ENCODE measurements at regions of chr3 and their contacts with region 1.

Region 1: GRCh38 chr3:25594007-25594502 is 70.7 kb downstream of the TOP2B start:
- DNase-seq: peak; percentile 64
- H3K4me3 ChIP-seq: peak overlapping the region in 1 of 2 experiments; percentile 20; a peak in 1 of 4 replicates
- H3K27ac ChIP-seq: peak overlapping the region; percentile 47 to 70
- H3K4me1 ChIP-seq: peaks cover 14 to 26% of the 10 kb centered on the region in 2 experiments
- H3K27me3 ChIP-seq: no peaks in the 10 kb centered on the region
- CTCF ChIP-seq: peak; percentile 96
- EP300 ChIP-seq: no peak; a peak in 1 of 4 replicates
- RAD21 ChIP-seq: peak; percentile 87

Region 2: DNA sequence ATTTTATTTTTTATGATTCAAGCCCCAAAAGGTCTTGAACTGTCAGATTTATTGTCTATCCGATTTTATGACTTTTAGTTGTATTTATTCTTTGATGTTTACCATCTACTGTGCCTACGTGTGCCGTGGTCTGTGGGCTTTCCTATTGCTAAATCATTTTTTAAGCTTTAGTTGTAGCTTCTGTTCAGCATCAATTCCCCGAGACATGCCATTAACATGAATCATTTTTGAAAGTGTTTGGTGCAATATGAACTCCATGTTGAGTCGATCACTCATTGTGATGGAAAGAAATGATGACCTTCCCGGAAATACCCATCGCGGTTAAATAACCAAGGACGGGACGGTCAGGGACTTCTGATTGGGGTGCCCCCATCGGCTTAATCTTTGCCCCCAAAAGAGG is 830.6 kb before region 1 on chr3:
- CTCF ChIA-PET with region 1: interaction called, 16 read pairs
- POLR2A ChIA-PET with region 1: no interaction called
- DNase-seq: no peak
- H3K4me3 ChIP-seq: no peak overlapping the region
- H3K27ac ChIP-seq: no peak overlapping the region
- H3K4me1 ChIP-seq: peaks cover 0 to 3% of the 10 kb centered on the region in 2 experiments; a peak in 2 of 4 replicates
- H3K27me3 ChIP-seq: no peaks in the 10 kb centered on the region
- CTCF ChIP-seq: no peak
- EP300 ChIP-seq: no peak
- RAD21 ChIP-seq: no peak

Region 3: GRCh38 chr3:25033407-25034029 is 560.5 kb before region 1 on chr3:
- CTCF ChIA-PET with region 1: interaction called, 18 read pairs
- POLR2A ChIA-PET with region 1: no interaction called
- DNase-seq: peak; percentile 29
- H3K4me3 ChIP-seq: no peak overlapping the region; a peak in 1 of 4 replicates
- H3K27ac ChIP-seq: no peak overlapping the region
- H3K4me1 ChIP-seq: peaks cover 0 to 4% of the 10 kb centered on the region in 2 experiments; a peak in 2 of 4 replicates
- H3K27me3 ChIP-seq: no peaks in the 10 kb centered on the region
- CTCF ChIP-seq: peak; percentile 62
- EP300 ChIP-seq: no peak
- RAD21 ChIP-seq: peak; percentile 50

Region 4: GRCh38 chr3:25441234-25441856 is 152.7 kb before region 1 on chr3:
- CTCF ChIA-PET with region 1: interaction called, 25 read pairs
- POLR2A ChIA-PET with region 1: no interaction called
- DNase-seq: no peak
- H3K4me3 ChIP-seq: no peak overlapping the region
- H3K27ac ChIP-seq: no peak overlapping the region; a peak in 1 of 4 replicates
- H3K4me1 ChIP-seq: peaks cover 5 to 14% of the 10 kb centered on the region in 2 experiments
- H3K27me3 ChIP-seq: no peaks in the 10 kb centered on the region
- CTCF ChIP-seq: peak; percentile 80
- EP300 ChIP-seq: no peak
- RAD21 ChIP-seq: no peak

Region 5: DNA sequence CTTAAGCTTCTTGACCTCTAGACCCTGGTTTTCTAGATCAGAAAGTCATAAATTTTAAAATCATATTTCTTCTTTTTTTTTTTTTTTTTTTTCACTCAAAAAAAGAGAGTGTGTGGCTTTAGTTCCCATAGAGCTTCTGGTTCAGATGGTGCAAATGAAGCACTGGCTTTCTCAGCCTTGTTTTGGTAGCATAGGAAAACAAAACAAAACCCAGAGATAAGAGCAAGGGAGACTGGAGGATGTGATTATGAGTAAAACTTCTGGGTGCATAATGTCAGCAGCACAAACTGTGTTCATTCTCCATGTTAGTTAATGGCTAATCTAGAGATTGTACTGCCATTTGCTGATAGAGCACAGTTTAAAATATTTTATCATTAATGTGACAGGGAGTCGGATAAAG is 110.6 kb before region 1 on chr3:
- CTCF ChIA-PET with region 1: interaction called, 15 read pairs
- POLR2A ChIA-PET with region 1: no interaction called
- DNase-seq: peak; percentile 31
- H3K4me3 ChIP-seq: no peak overlapping the region
- H3K27ac ChIP-seq: peak overlapping the region; percentile 62 to 86
- H3K4me1 ChIP-seq: peaks cover 42 to 66% of the 10 kb centered on the region in 2 experiments
- H3K27me3 ChIP-seq: no peaks in the 10 kb centered on the region
- CTCF ChIP-seq: no peak
- EP300 ChIP-seq: 0 out of 4 replicates have a peak, but pooled peaks of 1 of the 2 experiments have one; percentile 8
- RAD21 ChIP-seq: no peak

Region 6: DNA sequence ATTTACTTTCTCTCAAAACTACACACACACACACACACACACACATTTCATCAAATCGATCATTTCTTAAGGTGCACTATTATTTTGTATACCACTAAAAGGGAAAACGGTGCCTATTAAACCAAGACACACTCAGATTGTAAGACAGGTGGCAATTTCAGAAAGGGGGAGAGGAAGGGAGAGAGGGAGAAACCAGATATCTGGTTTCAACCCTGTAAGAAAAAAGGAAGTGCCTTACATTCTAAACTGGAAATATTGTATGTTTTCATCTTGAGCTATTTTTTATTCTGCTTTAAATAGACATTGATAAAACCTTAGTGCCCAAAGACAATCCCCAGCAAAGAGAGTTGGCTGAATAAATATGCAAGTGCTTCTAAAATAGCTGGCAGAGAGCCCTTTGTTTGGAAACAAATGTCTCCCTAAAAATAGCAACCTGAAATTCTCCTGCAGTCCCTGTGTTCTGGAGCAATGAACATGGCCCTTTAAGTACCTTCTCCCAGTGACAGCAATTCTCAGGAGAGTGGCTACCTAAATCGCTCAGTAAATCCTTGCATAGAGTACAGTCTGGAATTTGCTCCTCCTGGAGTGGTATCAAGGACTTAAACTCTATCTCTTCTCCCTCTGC is 80.3 kb before region 1 on chr3:
- CTCF ChIA-PET with region 1: no interaction called
- POLR2A ChIA-PET with region 1: no interaction called
- DNase-seq: no peak
- H3K4me3 ChIP-seq: no peak overlapping the region
- H3K27ac ChIP-seq: peak overlapping the region; percentile 4 to 75; a peak in 2 of 4 replicates
- H3K4me1 ChIP-seq: peaks cover 14 to 21% of the 10 kb centered on the region in 2 experiments; a peak in 3 of 4 replicates
- H3K27me3 ChIP-seq: no peaks in the 10 kb centered on the region
- CTCF ChIP-seq: no peak
- EP300 ChIP-seq: no peak
- RAD21 ChIP-seq: no peak